Right ventricle myocardium inferior (tissue), 1 donor: ENCODE measurements at regions of chr1 and their contacts with region 1.

Region 1: DNA sequence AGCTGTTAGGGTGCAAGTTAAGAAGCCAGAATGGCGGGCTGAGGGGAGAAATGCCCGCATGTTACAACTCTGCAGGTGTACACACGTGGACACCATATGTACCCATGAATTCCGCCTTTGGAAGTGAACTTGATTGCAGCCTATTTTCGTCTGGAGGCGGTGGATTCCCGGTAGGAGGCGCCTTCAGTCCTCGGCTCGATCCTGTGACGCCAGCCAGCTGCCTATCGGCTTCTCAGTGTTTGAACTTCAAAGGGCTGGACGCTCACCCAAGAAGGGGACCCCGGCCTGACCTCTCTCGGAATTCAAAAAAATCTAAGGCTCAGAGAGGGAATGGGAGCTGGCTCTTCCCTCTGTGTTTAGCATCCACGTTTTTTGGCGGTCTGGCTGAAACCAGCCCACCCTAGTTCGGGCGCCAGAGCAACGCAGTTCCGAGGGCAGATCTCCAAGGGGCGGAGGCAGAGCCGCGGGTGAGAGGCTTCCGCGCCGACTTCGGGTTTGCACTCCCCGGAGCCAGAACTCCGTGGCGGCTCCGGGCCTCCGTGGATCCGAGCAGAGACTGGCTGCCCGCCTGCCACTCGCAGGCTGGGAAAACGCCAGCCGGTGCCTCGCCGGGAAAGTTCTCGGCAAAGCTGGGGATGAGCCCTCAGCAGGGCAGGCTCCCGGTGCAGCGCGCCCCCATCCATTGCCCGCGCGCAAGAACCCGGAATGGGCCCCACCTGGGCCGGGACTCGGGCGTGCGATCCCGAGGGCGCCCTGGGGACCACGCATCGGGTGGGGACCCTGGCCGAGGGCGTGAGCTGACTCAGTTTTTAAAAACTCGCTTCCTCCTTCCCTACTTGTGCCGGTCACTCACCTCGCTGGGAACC is 996 bp upstream of the TMEM51 start:
- DNase-seq: peak; percentile 86
- ATAC-seq: peak; percentile 66

Region 2: GRCh38 chr1:15100121-15100874 is 52.3 kb before region 1 on chr1:
- intact Hi-C with region 1: no loop called
- DNase-seq: no peak
- ATAC-seq: peak; percentile 37

Region 3: GRCh38 chr1:15128520-15129313 is 23.8 kb before region 1 on chr1:
- intact Hi-C with region 1: loop called (anchors 2 kb)
- DNase-seq: peak; percentile 82
- ATAC-seq: peak; percentile 84

Region 4: GRCh38 chr1:15214527-15214926 is 62.0 kb after region 1 on chr1:
- intact Hi-C with region 1: loop called (anchors 5 kb)
- DNase-seq: no peak
- ATAC-seq: no peak

Region 5: GRCh38 chr1:15246960-15247614 is 94.5 kb after region 1 on chr1 and contains the start of gene FHAD1:
- intact Hi-C with region 1: no loop called
- DNase-seq: peak; percentile 83
- ATAC-seq: peak; percentile 66
- total RNA-seq, gene FHAD1: not detected

Region 6: DNA sequence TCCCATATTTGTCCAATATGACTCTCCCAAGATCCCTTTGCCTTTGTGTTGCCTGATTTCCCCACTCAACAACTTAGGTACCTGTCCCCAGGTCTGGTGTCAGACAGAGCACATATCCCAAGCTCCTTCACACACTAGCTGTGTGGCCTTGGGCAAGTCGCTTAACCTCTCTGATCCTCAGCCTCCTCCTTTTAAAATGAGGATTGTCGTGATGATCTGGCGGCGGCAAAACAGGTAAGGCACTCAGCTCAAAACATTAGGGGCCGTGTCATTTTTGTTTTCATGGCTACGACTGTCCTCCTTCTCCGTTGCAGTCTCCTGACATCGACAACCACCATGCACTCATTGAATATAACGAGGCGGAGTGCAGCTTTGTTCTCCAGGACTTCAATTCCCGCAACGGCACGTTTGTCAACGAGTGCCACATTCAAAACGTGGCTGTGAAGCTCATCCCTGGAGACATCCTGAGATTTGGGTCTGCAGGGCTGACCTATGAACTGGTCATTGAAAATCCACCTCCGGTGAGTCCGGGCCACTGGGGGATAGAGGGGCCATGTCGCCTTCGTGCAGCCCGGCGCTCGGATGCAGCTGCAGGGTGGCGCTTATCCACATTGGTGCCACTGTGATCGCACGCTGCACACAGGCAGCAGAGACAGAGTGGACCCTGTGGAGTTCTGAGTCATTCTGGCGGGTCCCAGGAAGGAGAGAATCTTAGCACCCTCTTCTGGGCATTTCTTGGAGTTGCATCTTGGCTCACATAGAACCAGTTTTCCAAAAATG is 119.6 kb after region 1 on chr1:
- intact Hi-C with region 1: loop called (anchors 1 kb)
- DNase-seq: peak; percentile 72
- ATAC-seq: peak; percentile 74

Region 7: GRCh38 chr1:15304701-15305467 is 152.3 kb after region 1 on chr1:
- intact Hi-C with region 1: loop called (anchors 10 kb)
- DNase-seq: peak; percentile 81
- ATAC-seq: no peak